ENCODE measurements at regions of chr20 and their contacts with region 1.

Region 1: GRCh38 chr20:48904365-48905296 is 16.9 kb upstream of the ARFGEF2 start:
- DNase-seq: no peak

Region 2: GRCh38 chr20:47809111-47809912 is 1095.3 kb before region 1 on chr20:
- intact Hi-C with region 1: loop called in 1 of 2 experiments (anchors 10 kb)
- DNase-seq: peak; percentile 69

Region 3: GRCh38 chr20:48657475-48658470 is 246.9 kb before region 1 on chr20:
- intact Hi-C with region 1: loop called (anchors 1 to 5 kb)
- DNase-seq: no peak

Region 4: GRCh38 chr20:48787861-48788375 is 116.7 kb before region 1 on chr20:
- intact Hi-C with region 1: no loop called
- DNase-seq: peak; percentile 73

Region 5: GRCh38 chr20:48828022-48828743 is 76.4 kb before region 1 on chr20:
- intact Hi-C with region 1: loop called in 1 of 2 experiments (anchors 5 kb)
- DNase-seq: peak; percentile 92

Region 6: DNA sequence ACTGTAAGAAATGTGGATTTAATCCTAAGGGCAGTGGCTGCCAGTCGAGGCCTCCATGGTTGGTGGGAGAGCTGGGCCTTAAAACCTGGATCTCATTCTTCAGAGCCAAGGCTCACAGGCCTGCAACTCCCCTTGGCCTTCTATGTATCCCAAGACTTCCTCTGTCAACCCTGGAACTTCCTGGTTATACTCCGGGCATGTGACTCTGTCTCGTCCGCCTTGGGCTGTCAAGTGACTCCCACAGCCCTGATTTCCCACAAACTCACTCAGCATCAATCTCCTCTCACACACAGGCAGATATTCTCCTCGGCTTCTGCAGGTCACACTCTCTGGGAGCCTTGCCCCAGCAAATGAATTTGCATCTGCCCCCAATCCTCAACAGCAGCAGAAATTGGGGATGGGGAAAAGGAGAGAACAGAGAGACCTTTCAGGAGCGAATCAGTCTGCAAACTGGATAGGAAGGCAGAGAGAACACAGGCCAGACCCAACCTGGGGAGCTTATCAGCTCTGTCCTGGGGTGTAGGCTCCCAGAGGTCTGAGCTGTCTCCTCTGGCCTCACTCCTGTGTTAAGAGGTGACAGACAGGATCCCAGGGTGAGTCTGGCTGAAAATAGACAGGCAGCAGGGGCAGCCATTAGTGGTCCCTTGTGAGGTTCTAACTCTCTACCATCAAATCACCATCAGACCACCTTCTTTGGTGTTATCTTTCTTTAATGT is 46.4 kb before region 1 on chr20:
- intact Hi-C with region 1: no loop called
- DNase-seq: no peak

Region 7: GRCh38 chr20:48928832-48929725 is 24.4 kb after region 1 on chr20:
- intact Hi-C with region 1: no loop called
- DNase-seq: no peak